Esophagus squamous epithelium (tissue), 5 donors: ENCODE measurements at regions of chr10 and their contacts with region 1.

Region 1: DNA sequence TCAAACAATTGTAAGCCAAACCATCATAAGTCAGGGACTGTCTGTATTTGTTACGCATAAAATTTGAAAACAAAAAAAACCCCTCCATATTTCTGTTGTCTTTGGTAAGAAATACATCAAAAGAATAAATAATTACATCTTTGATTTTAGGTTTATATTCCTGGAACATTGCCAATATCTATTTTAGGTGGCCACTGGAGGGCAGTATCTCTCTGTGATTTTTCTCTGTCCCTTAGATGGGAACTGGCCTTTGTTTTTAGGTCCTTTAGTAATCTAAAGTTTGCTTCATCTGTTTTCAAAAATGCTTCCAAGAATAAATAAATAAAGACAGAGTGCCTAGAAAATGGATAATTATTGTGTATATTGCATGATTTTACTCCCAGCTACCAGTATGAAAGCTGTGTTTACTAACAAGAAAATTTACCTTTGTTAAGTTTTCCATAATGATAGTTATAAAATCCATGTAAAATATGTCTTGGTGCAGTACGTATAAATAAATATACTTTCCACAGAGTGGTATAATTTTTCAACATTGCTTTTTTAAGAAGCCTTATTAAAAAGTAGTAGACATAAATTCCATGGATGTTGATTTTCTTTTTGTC is 64.2 kb downstream of the PHYHIPL start:
- DNase-seq: no peak
- H3K4me3 ChIP-seq: no peak overlapping the region
- H3K27ac ChIP-seq: no peak overlapping the region
- H3K4me1 ChIP-seq: no peaks in the 10 kb centered on the region
- H3K27me3 ChIP-seq: no peaks in the 10 kb centered on the region
- CTCF ChIP-seq: peak; percentile 14 to 79 (median 62)
- POLR2A ChIP-seq: no peak

Region 2: GRCh38 chr10:59465088-59465487 is 224.4 kb after region 1 on chr10:
- intact Hi-C with region 1: loop called (anchors 10 kb)
- DNase-seq: no peak
- H3K4me3 ChIP-seq: no peak overlapping the region
- H3K27ac ChIP-seq: no peak overlapping the region
- H3K4me1 ChIP-seq: no peaks in the 10 kb centered on the region
- H3K27me3 ChIP-seq: no peaks in the 10 kb centered on the region
- CTCF ChIP-seq: peak in 5 of 6 experiments; percentile 9 to 52 (median 29)
- POLR2A ChIP-seq: no peak

Region 3: DNA sequence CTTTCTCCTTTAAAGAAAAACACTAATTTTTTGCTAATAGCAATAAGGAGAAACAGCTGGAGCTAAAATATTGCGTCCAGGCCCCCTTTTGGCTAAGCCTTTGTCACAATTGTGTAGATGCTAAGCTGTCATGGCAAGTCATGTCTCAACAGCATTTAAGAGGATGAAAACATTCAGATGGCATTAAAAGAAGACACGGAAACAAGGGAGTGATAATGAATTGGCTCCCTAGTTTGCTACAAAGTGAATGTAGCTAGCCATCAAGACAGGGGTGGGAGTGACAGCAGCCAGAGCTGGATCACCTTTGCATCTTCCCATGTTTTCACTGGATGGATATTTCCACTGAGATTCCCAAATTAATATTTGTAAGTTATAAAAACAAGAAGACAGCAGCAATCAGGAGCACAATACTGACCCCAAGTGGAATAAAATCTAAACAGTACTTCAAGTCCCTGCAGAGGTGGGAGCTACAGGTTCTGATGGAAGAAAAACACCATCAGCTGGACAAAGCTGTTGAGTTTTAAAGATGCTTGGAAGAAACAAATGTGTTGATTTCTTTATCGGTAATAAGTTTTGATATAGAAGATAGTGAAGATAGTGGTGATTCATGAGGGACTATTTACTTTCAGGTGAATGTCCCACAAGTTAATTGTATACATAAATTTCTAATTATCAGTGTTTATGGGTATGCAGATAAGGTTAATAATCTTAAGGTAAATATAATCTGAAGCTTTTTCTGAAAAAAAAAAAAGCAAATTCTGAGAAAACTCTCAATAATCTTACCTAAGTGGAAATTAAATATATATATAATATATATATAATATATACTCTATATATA is 339.6 kb after region 1 on chr10:
- intact Hi-C with region 1: loop called (anchors 10 kb)
- DNase-seq: no peak
- H3K4me3 ChIP-seq: no peak overlapping the region
- H3K27ac ChIP-seq: peak overlapping the region in 1 of 4 donors; percentile 12
- H3K4me1 ChIP-seq: peaks cover 0 to 6% (median 0%) of the 10 kb centered on the region in 3 donors
- H3K27me3 ChIP-seq: no peaks in the 10 kb centered on the region
- CTCF ChIP-seq: peak in 4 of 6 experiments; percentile 11 to 52 (median 41)
- POLR2A ChIP-seq: no peak